Activated naive CD4-positive, alpha-beta T cell treated with anti-CD3 and anti-CD28 coated beads for 36 hours (primary cell): ENCODE measurements at regions of chrX and their contacts with region 1.

Region 1: DNA sequence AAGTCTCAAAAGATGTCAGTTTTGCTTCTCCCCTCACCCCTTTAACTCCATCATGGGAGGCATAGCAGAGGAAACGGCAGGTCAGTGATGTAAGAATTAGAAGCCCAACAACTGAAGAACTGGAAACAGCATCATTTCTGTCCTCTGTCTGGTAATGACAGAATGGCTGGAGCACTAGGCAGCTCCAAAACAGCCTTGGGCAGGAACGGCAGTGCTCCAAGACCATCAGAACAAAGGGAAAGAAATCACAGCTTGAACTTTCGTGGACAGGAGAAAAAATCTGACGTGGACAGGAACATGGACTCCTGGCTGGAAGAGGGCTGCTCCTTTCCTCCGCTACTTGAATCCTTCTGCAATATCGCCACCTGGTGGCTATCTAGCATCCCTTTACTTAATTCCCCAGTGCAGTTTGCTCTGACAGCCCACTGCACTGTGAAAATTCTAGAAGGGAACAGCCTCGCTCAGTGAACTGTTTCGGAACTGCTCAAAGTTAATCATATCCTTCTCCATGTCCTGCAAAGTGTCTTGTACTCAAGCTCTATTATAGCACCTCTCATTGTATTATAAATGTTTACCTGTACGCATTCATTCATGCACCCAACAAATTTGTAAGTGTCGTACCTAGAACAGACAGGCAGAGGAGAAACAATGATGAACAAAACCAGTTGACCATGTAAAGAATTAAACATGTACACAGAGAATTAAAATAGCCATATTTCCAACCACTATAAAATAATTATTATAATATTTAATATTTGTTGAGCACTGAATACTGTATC is 20.4 kb downstream of the SLC25A53 start:
- DNase-seq: peak; percentile 63
- H3K4me3 Mint-ChIP-seq: no peak overlapping the region
- H3K27ac Mint-ChIP-seq: no peak overlapping the region
- H3K4me1 Mint-ChIP-seq: peaks cover 15% of the 10 kb centered on the region
- H3K27me3 Mint-ChIP-seq: no peaks in the 10 kb centered on the region

Region 2: GRCh38 chrX:104113222-104113965 is 23.0 kb before region 1 on chrX:
- CTCF ChIA-PET with region 1: interaction called, 12 read pairs
- intact Hi-C with region 1: loop called (anchors 1 kb)
- DNase-seq: peak; percentile 62
- H3K4me3 Mint-ChIP-seq: peak overlapping the region; percentile 74
- H3K27ac Mint-ChIP-seq: no peak overlapping the region
- H3K4me1 Mint-ChIP-seq: peaks cover 33% of the 10 kb centered on the region
- H3K27me3 Mint-ChIP-seq: no peaks in the 10 kb centered on the region

Region 3: DNA sequence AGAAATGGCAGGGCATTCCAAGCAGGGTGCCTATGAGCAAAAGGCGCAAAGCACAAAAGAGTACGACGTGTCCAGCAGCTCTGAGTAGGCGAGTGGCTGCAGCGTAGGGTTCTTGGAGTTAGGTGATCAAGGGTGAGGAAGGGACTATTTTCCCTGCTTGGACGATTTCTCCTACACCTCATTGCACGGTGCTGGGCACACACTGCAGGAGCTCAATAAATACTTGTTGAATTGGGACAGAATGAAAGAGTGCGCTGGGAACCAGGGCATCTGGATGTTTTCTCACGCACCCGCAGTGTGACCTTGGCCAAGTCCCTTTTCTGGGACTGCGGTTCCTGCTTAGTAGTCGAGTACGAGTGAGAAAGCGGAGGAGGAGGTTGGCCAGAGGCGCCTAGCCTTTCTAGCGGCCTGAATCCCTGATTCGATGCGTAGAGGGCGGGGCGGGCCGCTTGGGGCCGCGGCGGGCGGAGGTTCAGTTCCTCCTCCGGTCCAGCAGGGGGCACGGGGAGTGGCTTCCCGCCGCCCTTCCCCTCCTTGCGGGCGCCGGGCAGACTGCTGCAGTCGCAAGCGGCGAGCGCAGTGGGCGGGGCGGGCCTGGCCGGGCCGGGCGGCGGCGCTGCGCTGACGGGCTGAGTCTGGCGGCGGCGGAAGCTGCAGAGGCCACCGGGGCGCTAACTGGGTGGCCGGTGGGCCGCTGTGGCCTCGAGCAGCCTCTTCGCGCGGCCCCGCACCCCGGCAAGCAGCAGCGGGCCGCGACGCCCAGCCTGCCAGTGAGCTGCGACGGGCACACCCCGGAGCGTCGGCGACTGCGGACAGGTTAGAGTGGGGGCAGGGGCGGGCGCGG is 29.7 kb after region 1 on chrX and contains the start of gene FAM199X:
- CTCF ChIA-PET with region 1: no interaction called
- intact Hi-C with region 1: no loop called
- DNase-seq: peak; percentile 83
- H3K4me3 Mint-ChIP-seq: peak within 1 kb of the TSS; percentile 73
- H3K27ac Mint-ChIP-seq: peak within 1 kb of the TSS; percentile 56
- H3K4me1 Mint-ChIP-seq: peaks cover 31% of the 10 kb centered on the region
- H3K27me3 Mint-ChIP-seq: no peaks in the 10 kb centered on the region
- total RNA-seq, gene FAM199X: 6.0 to 6.1 TPM

Region 4: DNA sequence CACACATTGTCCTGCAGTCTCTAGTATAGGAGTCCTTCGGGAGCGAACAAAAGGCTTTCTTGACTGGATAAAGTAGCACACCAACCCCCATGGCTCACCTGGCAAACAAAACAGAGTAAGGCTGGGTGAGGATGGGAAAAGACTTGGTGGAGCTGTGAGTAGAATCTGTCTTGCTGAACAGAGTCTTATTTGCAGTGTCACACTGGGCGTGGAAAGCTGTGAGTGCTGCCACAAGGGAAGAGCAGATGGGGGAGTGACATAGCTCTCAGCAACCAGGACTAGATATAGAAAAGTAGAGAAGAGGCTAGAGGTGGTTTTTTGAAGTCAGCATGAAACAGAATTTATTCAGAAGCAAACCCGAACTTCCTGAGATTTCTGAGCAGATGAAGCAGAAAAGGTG is 255.5 kb after region 1 on chrX:
- CTCF ChIA-PET with region 1: no interaction called
- intact Hi-C with region 1: no loop called
- DNase-seq: no peak
- H3K4me3 Mint-ChIP-seq: no peak overlapping the region
- H3K27ac Mint-ChIP-seq: no peak overlapping the region
- H3K4me1 Mint-ChIP-seq: no peaks in the 10 kb centered on the region
- H3K27me3 Mint-ChIP-seq: no peaks in the 10 kb centered on the region